Transverse colon (tissue), 4 donors: ENCODE measurements at regions of chr1 and their contacts with region 1.

Region 1: GRCh38 chr1:3483801-3484444 is 29.5 kb downstream of the ARHGEF16 start:
- DNase-seq: peak; percentile 50
- H3K4me3 ChIP-seq: no peak overlapping the region
- H3K27ac ChIP-seq: no peak overlapping the region
- H3K4me1 ChIP-seq: peaks cover 0 to 9% (median 7%) of the 10 kb centered on the region in 4 donors
- H3K27me3 ChIP-seq: no peaks in the 10 kb centered on the region
- CTCF ChIP-seq: peak; percentile 75 to 93 (median 91)
- EP300 ChIP-seq: no peak
- POLR2A ChIP-seq: no peak

Region 2: DNA sequence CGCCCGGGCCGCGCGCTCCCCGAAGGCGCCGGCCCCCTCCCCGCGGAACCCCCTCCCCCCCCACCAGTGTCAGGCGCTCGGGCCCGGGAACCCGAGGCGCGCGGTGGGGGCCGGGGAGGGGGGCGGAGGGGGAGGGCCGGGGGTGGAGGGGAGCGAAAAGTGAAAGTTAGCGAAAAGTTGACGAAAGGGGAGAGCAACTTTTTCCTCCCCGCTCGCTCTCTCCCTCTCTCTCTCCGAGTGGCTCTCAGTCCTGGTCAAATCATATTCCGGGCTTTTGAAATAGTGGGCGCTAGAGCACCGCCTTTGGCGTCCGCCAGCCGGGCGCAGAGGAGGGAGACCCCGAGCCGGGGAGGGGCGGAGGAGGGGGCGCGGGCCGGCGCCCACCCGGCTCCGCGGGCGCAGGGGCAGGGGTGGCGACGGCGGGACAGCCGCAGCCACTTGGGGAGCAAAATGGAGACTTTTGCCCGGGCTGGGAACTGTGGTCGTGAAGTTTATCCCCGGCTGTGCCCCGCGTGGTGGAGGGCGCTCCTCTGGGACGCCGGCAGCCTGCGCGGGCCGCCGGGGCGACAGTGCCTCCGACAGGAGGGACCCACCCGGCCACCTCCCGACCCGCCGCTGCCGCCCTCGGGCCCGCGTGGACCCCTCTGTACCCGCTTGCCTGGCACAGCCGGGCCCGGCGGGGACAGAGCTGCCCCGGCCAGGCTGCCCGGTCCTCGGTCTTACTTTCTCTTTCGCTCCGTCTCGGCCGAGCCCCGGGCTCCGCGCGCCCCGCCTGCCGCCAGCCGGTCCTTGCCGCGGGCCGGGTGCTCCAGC is 414.2 kb before region 1 on chr1:
- in situ Hi-C with region 1: no loop called
- intact Hi-C with region 1: no loop called
- DNase-seq: peak; percentile 22
- H3K4me3 ChIP-seq: peak overlapping the region; percentile 58 to 66 (median 66)
- H3K27ac ChIP-seq: peak overlapping the region; percentile 14 to 69 (median 58)
- H3K4me1 ChIP-seq: peaks cover 14 to 31% (median 21%) of the 10 kb centered on the region in 4 donors
- H3K27me3 ChIP-seq: peaks cover 94% of the 10 kb centered on the region
- CTCF ChIP-seq: peak in 2 of 5 experiments; percentile 18 to 22
- EP300 ChIP-seq: no peak
- POLR2A ChIP-seq: no peak

Region 3: GRCh38 chr1:3219005-3219790 is 264.7 kb before region 1 on chr1:
- in situ Hi-C with region 1: no loop called
- intact Hi-C with region 1: no loop called
- DNase-seq: peak; percentile 36
- H3K4me3 ChIP-seq: no peak overlapping the region
- H3K27ac ChIP-seq: peak overlapping the region in 2 of 4 donors; percentile 17 to 34
- H3K4me1 ChIP-seq: peaks cover 5 to 42% (median 22%) of the 10 kb centered on the region in 4 donors
- H3K27me3 ChIP-seq: no peaks in the 10 kb centered on the region
- CTCF ChIP-seq: no peak
- EP300 ChIP-seq: no peak
- POLR2A ChIP-seq: no peak

Region 4: GRCh38 chr1:3453203-3453761 is 30.6 kb before region 1 on chr1:
- in situ Hi-C with region 1: loop called in 1 of 4 experiments (anchors 5 kb)
- intact Hi-C with region 1: no loop called
- DNase-seq: peak; percentile 86
- H3K4me3 ChIP-seq: no peak overlapping the region
- H3K27ac ChIP-seq: peak overlapping the region in 3 of 4 donors; percentile 92 to 93 (median 92)
- H3K4me1 ChIP-seq: peaks cover 19 to 50% (median 46%) of the 10 kb centered on the region in 4 donors
- H3K27me3 ChIP-seq: peaks cover 38% of the 10 kb centered on the region
- CTCF ChIP-seq: peak; percentile 87 to 96 (median 95)
- EP300 ChIP-seq: no peak
- POLR2A ChIP-seq: no peak

Region 5: GRCh38 chr1:3624200-3625136 is 140.5 kb after region 1 on chr1 and contains the start of gene TPRG1L:
- in situ Hi-C with region 1: loop called in 1 of 4 experiments (anchors 10 kb)
- intact Hi-C with region 1: no loop called
- DNase-seq: peak; percentile 99
- H3K4me3 ChIP-seq: peak within 1 kb of the TSS; percentile 78 to 98 (median 94)
- H3K27ac ChIP-seq: peak within 1 kb of the TSS; percentile 82 to 94 (median 92)
- H3K4me1 ChIP-seq: peaks cover 15 to 27% (median 24%) of the 10 kb centered on the region in 4 donors
- H3K27me3 ChIP-seq: no peaks in the 10 kb centered on the region
- CTCF ChIP-seq: no peak
- EP300 ChIP-seq: peak; percentile 12
- POLR2A ChIP-seq: peak; percentile 47
- total RNA-seq, gene TPRG1L: 24.5 to 86.8 (median 56.0) TPM